Activated T-helper 2 cell treated with anti-CD3 and anti-CD28 coated beads, Interferon-gamma antibody, Interleukin-2, Interleukin-4, amounts not matched to agents 10 μg/mL and 5 μg/mL and 100 μg/mL, durations not matched to agents 14 hours and 24 hours and 36 hours (primary cell): ENCODE measurements at regions of chr2 and their contacts with region 1.

Region 1: GRCh38 chr2:159615140-159615951 is 1.0 kb downstream of the BAZ2B start:
- DNase-seq: peak; percentile 11
- H3K4me3 Mint-ChIP-seq: peak overlapping the region; percentile 82
- H3K27ac Mint-ChIP-seq: peak overlapping the region; percentile 69
- H3K4me1 Mint-ChIP-seq: peaks cover 10% of the 10 kb centered on the region
- H3K27me3 Mint-ChIP-seq: peaks cover 41% of the 10 kb centered on the region

Region 2: DNA sequence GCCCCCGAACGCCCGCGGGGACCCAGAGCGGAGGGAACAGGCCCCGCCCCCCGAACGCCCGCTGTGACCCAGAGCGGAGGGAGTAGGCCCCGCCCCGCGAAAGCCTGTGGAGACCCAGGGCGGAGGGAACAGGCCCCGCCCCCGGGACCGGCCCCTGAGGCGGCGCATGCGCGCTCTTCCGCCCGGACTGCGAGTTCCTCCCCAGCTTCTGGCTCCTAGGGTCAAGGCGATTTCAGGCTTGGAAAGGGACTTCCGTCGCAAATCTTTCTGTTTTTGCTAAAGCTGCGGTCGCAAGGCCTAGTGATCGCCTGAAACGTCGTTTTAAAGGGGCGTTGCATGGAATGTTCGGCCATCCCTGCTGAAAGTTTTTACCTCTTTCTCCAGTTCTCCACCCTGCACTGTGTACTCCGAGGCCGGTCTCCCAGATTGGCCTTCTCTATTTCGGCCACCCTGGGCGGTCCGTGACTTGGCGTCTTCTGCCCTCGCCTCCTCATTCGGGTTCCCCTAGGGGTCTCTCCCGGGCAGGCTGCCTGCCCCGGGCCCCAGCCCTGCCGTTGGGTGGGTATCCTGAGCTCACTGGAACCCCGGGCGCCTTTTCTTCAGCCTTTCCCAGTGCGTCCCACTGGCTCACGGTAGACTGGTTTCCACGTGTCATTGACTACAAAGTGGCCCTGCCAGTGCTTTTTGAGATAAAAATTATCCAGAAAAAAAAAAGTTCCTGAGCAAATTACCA is 328.5 kb before region 1 on chr2:
- intact Hi-C with region 1: loop called (anchors 10 kb)
- DNase-seq: peak; percentile 94
- H3K4me3 Mint-ChIP-seq: peak overlapping the region; percentile 79
- H3K27ac Mint-ChIP-seq: peak overlapping the region; percentile 78
- H3K4me1 Mint-ChIP-seq: peaks cover 22% of the 10 kb centered on the region
- H3K27me3 Mint-ChIP-seq: no peaks in the 10 kb centered on the region